Common myeloid progenitor, CD34-positive (primary cell): ENCODE measurements at regions of chr19 and their contacts with region 1.

Region 1: GRCh38 chr19:925526-926322 is at the start of gene ARID3A:
- DNase-seq: peak; percentile 79 to 90 (median 86)
- H3K4me3 ChIP-seq: peak within 1 kb of the TSS; percentile 69 to 91 (median 84)
- H3K27ac ChIP-seq: peak within 1 kb of the TSS; percentile 61 to 91
- H3K4me1 ChIP-seq: peaks cover 0 to 35% (median 33%) of the 10 kb centered on the region in 4 experiments
- H3K27me3 ChIP-seq: peaks cover 0 to 8% (median 2%) of the 10 kb centered on the region in 5 experiments

Region 2: GRCh38 chr19:855565-856274 is 70.0 kb before region 1 on chr19:
- CTCF ChIA-PET with region 1: interaction called, 11 read pairs
- POLR2A ChIA-PET with region 1: no interaction called
- DNase-seq: no peak
- H3K4me3 ChIP-seq: no peak overlapping the region
- H3K27ac ChIP-seq: no peak overlapping the region
- H3K4me1 ChIP-seq: peaks cover 0 to 21% (median 17%) of the 10 kb centered on the region in 4 experiments
- H3K27me3 ChIP-seq: peaks cover 0 to 46% (median 12%) of the 10 kb centered on the region in 5 experiments

Region 3: GRCh38 chr19:861763-862580 is 63.8 kb before region 1 on chr19:
- CTCF ChIA-PET with region 1: interaction called, 23 read pairs
- POLR2A ChIA-PET with region 1: no interaction called
- DNase-seq: peak; percentile 82 to 94 (median 93)
- H3K4me3 ChIP-seq: peak overlapping the region in 3 of 7 experiments; percentile 46 to 61 (median 52)
- H3K27ac ChIP-seq: no peak overlapping the region
- H3K4me1 ChIP-seq: peaks cover 0 to 40% (median 37%) of the 10 kb centered on the region in 4 experiments
- H3K27me3 ChIP-seq: peaks cover 0 to 17% (median 11%) of the 10 kb centered on the region in 5 experiments

Region 4: DNA sequence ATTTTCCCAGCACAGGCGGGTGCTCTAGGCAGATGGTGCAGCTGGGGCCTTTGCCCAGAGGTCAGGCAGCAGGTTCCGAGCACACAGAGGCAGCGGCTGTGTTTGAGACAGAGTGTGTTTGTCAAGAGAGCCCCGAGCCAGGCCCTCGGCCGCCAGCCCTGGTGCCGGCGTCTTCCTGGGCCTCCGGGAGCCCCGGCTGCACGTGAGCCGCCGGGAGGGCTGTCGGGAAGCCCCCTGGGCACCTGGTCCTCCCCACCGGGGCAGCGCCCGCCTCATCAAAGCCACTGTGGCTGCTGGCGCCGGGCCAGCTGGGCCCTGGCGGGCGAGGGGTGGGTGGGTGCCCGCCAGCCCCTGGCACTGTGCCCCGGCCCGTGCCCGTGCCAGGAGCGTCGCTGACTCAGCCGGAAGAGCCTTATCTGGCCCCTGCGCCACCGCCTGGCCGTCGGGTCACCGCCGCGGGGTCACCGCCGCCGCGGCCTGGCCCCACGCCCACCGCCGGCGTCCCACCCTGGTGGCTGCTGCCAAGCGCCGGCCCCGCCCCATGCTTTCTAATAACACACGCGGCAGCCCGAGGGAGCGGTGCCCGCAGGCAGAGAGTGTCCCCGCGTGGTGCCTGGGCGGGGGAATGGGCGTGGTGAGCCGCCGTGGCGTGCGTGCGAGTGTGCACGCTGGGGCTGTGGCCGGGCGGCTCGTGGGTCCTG is 15.0 kb after region 1 on chr19:
- CTCF ChIA-PET with region 1: interaction called, 35 read pairs
- POLR2A ChIA-PET with region 1: interaction called, 5 read pairs
- DNase-seq: peak; percentile 90 to 96 (median 94)
- H3K4me3 ChIP-seq: peak overlapping the region in 4 of 7 experiments; percentile 38 to 67 (median 58)
- H3K27ac ChIP-seq: peak overlapping the region; percentile 46 to 76
- H3K4me1 ChIP-seq: peaks cover 0 to 49% (median 45%) of the 10 kb centered on the region in 4 experiments
- H3K27me3 ChIP-seq: no peaks in the 10 kb centered on the region

Region 5: GRCh38 chr19:970695-971094 is 45.0 kb after region 1 on chr19:
- CTCF ChIA-PET with region 1: interaction called, 17 read pairs
- POLR2A ChIA-PET with region 1: no interaction called
- DNase-seq: peak in 2 of 3 donors; percentile 51 to 58
- H3K4me3 ChIP-seq: no peak overlapping the region
- H3K27ac ChIP-seq: no peak overlapping the region
- H3K4me1 ChIP-seq: no peaks in the 10 kb centered on the region
- H3K27me3 ChIP-seq: no peaks in the 10 kb centered on the region

Region 6: DNA sequence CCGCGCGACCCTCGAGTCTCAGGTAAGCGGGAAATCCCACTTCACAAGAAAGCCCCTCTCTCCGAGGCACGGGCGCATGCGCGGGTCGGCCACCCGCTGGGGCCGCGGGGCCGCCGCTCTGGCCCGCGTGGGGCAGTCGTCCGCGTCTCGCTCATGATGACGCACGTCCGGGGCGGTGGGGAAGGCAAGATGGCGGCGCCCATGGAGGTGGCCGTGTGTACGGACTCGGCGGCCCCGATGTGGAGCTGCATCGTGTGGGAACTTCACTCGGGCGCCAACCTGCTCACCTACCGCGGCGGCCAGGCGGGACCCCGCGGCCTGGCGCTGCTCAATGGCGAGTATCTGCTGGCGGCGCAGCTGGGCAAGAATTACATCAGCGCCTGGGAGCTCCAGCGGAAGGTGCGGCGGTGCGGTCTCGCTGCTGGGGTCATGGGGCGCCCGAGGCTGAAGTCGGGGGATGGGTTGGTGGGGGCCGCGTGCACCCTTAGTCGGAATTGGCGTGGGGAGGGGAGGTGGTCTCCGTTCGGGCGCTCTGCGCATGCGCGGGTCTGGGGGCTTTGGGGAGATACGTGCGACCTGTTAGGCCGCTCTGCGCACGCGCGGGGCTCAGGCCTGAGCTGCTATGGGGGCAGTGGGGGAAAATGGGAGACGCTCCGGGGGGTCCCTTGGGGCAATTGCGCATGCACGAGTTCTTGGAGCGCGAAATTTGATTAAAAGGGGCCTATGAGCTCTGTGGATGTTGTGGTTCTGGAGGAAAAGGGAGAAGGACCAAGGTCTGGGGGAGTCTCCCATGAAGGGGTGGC is 58.6 kb after region 1 on chr19 and contains the start of gene WDR18:
- CTCF ChIA-PET with region 1: interaction called, 90 read pairs
- POLR2A ChIA-PET with region 1: interaction called, 6 read pairs
- DNase-seq: peak; percentile 86 to 92 (median 90)
- H3K4me3 ChIP-seq: peak within 1 kb of the TSS; percentile 76 to 98 (median 93)
- H3K27ac ChIP-seq: peak within 1 kb of the TSS; percentile 74 to 87
- H3K4me1 ChIP-seq: peaks cover 0 to 33% (median 19%) of the 10 kb centered on the region in 4 experiments
- H3K27me3 ChIP-seq: no peaks in the 10 kb centered on the region